ENCODE measurements at regions of chr12 and their contacts with region 1.

Region 1: GRCh38 chr12:68745904-68746571 is at the start of gene SLC35E3:
- DNase-seq: peak; percentile 98
- total RNA-seq, gene SLC35E3: 8.8 to 11.8 TPM

Region 2: GRCh38 chr12:68587448-68587873 is 158.6 kb before region 1 on chr12:
- intact Hi-C with region 1: no loop called
- DNase-seq: no peak

Region 3: GRCh38 chr12:68807576-68808387 is 61.7 kb after region 1 on chr12 and contains the start of gene MDM2:
- intact Hi-C with region 1: loop called in 1 of 2 experiments (anchors 5 kb)
- DNase-seq: peak; percentile 99
- total RNA-seq, gene MDM2: 114 to 126 TPM

Region 4: DNA sequence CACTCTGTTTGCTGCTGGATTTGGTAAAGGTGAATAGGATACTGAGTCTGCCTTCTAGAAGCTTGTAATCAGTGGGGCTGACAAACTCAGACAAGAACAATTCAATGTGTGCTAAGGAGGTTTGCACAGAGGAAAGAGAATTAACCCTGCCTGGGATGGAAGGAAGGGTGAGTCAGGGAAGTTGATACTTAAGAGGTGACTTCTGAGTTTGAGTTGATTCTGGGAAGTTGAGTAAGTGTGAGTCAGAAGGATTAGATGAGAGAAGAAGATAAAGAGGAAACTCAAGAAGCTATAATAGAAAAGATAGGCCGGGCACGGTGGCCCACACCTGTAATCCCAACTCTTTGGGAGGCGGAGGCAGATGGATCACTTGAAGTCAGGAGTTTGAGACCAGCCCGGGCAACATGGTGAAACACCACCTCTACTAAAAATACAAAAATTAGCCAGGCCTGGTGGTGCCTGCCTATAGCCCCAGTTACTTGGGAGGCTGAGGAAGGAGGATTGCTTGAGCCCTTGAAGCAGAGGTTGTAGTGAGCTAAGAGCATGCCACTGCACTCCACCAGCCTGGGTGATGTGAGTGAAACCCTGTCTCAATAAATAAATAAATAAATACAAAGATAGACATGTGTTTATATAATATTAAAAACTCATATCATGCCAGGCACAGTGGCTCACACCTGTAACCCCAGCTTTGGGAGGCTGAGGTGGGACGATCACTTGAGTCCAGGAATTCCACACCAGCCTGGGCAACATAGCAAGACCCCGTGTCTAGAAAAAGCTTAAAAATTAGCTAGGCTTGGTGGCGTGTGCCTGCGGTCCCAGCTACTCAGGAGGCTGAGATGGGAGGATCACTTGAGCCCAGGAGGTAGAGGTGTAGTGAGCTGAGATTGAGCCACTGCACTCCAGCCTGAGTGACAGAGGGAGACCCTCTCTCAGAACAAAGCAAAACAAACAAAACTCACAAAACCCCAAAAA is 313.7 kb after region 1 on chr12:
- intact Hi-C with region 1: no loop called
- DNase-seq: no peak

Measured in posterior vena cava (tissue), 2 donors.